Endothelial cell of umbilical vein (primary cell): ENCODE measurements at regions of chr1 and their contacts with region 1.

Region 1: GRCh38 chr1:76154206-76154956 is 79.8 kb downstream of the ST6GALNAC3 start:
- DNase-seq: peak; percentile 81
- H3K4me3 ChIP-seq: peak overlapping the region in 2 of 3 experiments; percentile 3 to 67
- H3K27ac ChIP-seq: no peak overlapping the region
- H3K4me1 ChIP-seq: peaks cover 10% of the 10 kb centered on the region
- H3K27me3 ChIP-seq: no peaks in the 10 kb centered on the region
- CTCF ChIP-seq: peak; percentile 94 to 97
- POLR2A ChIP-seq: no peak

Region 2: GRCh38 chr1:75677443-75677842 is 476.9 kb before region 1 on chr1:
- CTCF ChIA-PET with region 1: no interaction called
- POLR2A ChIA-PET with region 1: no interaction called
- dilution Hi-C with region 1: no loop called
- intact Hi-C with region 1: no loop called
- DNase-seq: no peak
- H3K4me3 ChIP-seq: no peak overlapping the region
- H3K27ac ChIP-seq: no peak overlapping the region
- H3K4me1 ChIP-seq: no peaks in the 10 kb centered on the region
- H3K27me3 ChIP-seq: no peaks in the 10 kb centered on the region
- CTCF ChIP-seq: no peak
- POLR2A ChIP-seq: no peak

Region 3: DNA sequence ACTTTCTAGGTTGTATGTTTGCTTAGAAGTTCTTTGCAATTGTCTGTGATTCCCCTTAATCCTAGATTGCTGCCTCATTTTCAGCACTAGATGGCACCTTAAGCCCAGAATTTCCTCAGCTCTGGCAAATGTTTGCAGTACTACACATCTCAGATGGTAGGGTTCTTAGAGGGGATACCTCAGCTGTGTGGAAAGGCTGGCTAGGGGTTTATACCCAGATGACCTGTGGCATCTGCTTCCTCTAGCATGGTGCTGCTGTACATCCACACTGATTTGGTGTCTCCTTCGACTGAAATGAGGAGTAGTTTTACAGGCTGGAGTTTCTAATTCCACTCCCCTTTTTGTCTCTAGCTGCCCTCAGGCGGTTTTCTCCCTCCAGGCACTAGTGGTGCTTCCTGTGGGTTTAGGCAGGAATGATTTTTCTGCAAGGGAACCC is 245.6 kb before region 1 on chr1:
- CTCF ChIA-PET with region 1: interaction called, 24 read pairs
- POLR2A ChIA-PET with region 1: no interaction called
- dilution Hi-C with region 1: no loop called
- intact Hi-C with region 1: loop called (anchors 1 kb)
- DNase-seq: peak; percentile 60
- H3K4me3 ChIP-seq: no peak overlapping the region
- H3K27ac ChIP-seq: no peak overlapping the region
- H3K4me1 ChIP-seq: no peaks in the 10 kb centered on the region
- H3K27me3 ChIP-seq: no peaks in the 10 kb centered on the region
- CTCF ChIP-seq: peak; percentile 30 to 45
- POLR2A ChIP-seq: no peak

Region 4: GRCh38 chr1:76140227-76140626 is 14.2 kb before region 1 on chr1:
- CTCF ChIA-PET with region 1: interaction called, 22 read pairs
- POLR2A ChIA-PET with region 1: no interaction called
- dilution Hi-C with region 1: no loop called
- intact Hi-C with region 1: no loop called
- DNase-seq: no peak
- H3K4me3 ChIP-seq: no peak overlapping the region
- H3K27ac ChIP-seq: no peak overlapping the region
- H3K4me1 ChIP-seq: peaks cover 10% of the 10 kb centered on the region
- H3K27me3 ChIP-seq: no peaks in the 10 kb centered on the region
- CTCF ChIP-seq: peak in 1 of 2 donors; percentile 21
- POLR2A ChIP-seq: no peak

Region 5: DNA sequence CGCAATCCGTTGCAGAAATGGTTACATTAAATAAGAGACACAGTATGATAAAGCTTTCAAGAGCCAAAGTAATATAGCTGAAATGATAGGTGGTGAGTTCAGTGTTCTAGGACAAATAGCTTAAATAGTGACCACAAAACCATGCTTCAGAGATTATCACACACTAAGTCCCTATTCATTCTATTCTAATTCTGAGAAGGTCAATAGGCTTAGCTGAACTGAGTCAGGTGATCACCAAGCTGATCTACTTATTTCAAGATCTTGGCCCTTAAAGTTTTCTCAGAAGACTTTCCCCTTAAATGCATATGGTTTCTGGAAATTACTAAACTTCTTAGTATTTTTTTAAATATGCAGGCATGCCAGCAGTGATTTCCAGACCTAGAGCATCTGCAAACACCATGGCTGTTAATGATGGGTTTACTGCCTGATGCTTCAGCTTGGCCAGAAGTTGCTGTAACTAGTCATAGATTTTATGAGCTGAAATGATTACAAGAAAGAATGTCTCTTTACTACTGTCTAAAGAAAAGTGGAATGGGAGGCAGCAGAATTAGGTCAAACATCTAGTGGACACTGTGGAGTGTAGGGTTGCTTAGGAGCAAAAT is 163.0 kb after region 1 on chr1:
- CTCF ChIA-PET with region 1: interaction called, 8 read pairs
- POLR2A ChIA-PET with region 1: no interaction called
- dilution Hi-C with region 1: no loop called
- intact Hi-C with region 1: loop called (anchors 2 kb)
- DNase-seq: no peak
- H3K4me3 ChIP-seq: no peak overlapping the region
- H3K27ac ChIP-seq: no peak overlapping the region
- H3K4me1 ChIP-seq: no peaks in the 10 kb centered on the region
- H3K27me3 ChIP-seq: no peaks in the 10 kb centered on the region
- CTCF ChIP-seq: no peak
- POLR2A ChIP-seq: no peak

Region 6: GRCh38 chr1:76868154-76868882 is 713.9 kb after region 1 on chr1:
- CTCF ChIA-PET with region 1: interaction called, 3 read pairs
- POLR2A ChIA-PET with region 1: no interaction called
- dilution Hi-C with region 1: no loop called
- intact Hi-C with region 1: loop called (anchors 5 kb)
- DNase-seq: peak; percentile 37
- H3K4me3 ChIP-seq: peak overlapping the region in 2 of 3 experiments; percentile 19 to 31
- H3K27ac ChIP-seq: no peak overlapping the region
- H3K4me1 ChIP-seq: peaks cover 6% of the 10 kb centered on the region
- H3K27me3 ChIP-seq: peaks cover 44 to 77% of the 10 kb centered on the region in 2 experiments
- CTCF ChIP-seq: peak in 1 of 2 donors; percentile 17
- POLR2A ChIP-seq: no peak

Region 7: DNA sequence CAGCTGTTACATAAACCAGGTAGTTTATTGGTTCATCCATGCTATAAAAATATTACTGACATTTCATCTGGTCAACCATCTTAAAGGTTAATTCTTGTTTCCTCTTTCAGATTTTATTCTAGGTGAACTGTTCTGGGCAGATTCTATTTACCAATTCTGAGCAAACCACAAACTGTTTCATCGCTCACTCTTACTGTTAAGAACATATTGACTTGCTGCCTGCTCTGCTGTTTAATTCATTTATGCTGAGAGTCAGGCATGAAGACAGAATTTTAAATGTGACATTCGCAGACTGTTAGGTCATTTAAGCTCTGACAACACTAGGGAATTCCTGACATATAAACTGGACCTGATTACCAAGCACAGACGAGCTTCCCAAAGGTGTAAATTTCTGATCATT is 966.6 kb after region 1 on chr1:
- CTCF ChIA-PET with region 1: interaction called, 60 read pairs
- POLR2A ChIA-PET with region 1: no interaction called
- dilution Hi-C with region 1: no loop called
- intact Hi-C with region 1: loop called (anchors 1 kb)
- DNase-seq: no peak
- H3K4me3 ChIP-seq: no peak overlapping the region
- H3K27ac ChIP-seq: no peak overlapping the region
- H3K4me1 ChIP-seq: no peaks in the 10 kb centered on the region
- H3K27me3 ChIP-seq: no peaks in the 10 kb centered on the region
- CTCF ChIP-seq: no peak
- POLR2A ChIP-seq: no peak